Cardiac septum (tissue), 1 donor: ENCODE measurements at regions of chr10 and their contacts with region 1.

Region 1: GRCh38 chr10:48523820-48524758 is 80.8 kb downstream of the ARHGAP22 start:
- DNase-seq: peak; percentile 70

Region 2: GRCh38 chr10:48464871-48465736 is 59.0 kb before region 1 on chr10:
- intact Hi-C with region 1: loop called (anchors 5 kb)
- DNase-seq: peak; percentile 88